Left ventricle myocardium inferior (tissue), 1 donor: ENCODE measurements at regions of chr5 and their contacts with region 1.

Region 1: GRCh38 chr5:146965761-146966659 is 87.5 kb upstream of the PPP2R2B start:
- DNase-seq: no peak
- H3K4me3 ChIP-seq: no peak overlapping the region
- H3K27ac ChIP-seq: no peak overlapping the region
- H3K4me1 ChIP-seq: peaks cover 4% of the 10 kb centered on the region
- H3K27me3 ChIP-seq: no peaks in the 10 kb centered on the region
- CTCF ChIP-seq: peak; percentile 92

Region 2: DNA sequence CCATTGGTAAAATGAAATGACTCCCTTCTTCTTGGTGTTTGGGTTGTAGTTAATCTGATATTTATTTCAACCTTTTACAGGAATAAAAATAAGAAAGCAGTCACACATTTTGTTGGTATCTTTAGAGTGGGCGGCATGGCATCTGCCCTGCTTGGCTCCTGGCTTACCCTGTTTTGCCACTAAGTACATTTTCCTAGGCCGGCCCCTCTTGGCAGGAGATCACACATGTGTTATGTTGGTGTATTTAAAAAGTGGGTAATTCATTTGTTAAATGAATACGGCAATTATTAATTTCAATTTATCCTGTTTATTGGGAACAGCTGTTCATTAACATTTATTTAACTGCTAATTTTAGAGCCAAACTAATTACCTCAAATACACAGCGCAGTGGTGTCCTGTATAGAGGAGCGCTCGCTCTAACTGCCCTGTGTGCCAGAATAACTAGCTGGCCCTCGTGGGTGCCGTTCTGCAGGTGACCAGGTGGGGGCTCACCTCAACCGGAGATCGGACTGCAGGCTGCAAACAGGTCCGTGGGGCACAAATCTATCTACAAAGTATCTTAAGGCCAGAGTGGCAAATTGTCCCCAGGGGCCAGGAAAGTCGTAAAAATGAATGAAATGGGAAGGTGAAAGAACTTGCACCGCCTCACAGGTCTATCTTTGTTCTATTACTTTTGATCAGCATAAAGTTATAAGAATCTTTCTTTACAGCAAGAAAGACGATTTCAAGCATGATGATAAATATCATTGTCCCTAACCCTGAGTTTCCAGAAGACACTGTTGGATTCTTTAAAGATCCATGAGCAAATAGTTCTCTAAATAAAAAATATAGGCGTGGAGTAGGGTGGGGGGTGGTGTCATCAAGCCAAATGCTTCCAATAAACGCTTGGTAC is 423.8 kb before region 1 on chr5:
- intact Hi-C with region 1: loop called (anchors 5 kb)
- DNase-seq: peak; percentile 61
- H3K4me3 ChIP-seq: no peak overlapping the region
- H3K27ac ChIP-seq: no peak overlapping the region
- H3K4me1 ChIP-seq: no peaks in the 10 kb centered on the region
- H3K27me3 ChIP-seq: peaks cover 16% of the 10 kb centered on the region
- CTCF ChIP-seq: peak; percentile 84